Heart right ventricle (tissue), 16 donors: ENCODE measurements at regions of chr17 and their contacts with region 1.

Region 1: DNA sequence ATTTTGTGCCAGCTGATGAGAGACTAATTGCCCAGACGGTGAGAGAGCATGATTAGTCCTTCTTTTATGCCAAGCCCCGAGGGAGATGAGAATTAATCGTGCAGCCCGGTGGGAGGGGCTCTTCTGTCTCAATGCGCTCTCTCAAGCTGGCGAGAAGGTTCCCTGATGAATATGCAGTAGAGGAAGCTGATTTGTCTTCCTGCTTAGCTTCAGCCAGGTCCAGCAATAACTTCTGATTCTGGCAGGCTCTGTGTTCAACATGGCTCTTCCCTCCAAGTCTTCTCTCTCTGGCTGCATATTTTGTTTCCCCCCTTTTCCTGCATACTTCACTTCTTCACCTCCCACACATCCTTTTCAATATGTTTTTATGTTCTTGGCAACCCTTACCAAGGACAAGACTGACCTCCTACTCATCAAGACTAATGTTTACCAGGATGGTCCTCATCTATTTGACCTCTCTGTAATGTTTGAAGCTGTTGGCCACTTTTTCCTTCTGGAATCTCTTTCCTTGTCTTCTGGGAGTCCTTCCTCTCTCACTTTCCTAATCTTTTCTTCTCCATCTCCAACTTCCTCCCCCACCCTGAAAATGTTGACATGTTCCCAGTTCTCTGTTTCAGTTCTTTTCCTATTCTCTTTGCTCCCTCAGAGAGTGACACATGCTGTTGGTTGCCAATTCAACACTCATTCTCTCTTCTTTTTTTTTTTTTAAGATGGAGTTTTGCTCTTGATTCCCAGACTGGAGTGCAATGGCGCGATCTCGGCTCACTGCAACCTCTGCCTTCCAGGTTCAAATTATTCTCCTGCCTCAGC is 33.1 kb downstream of the ARL4D start:
- DNase-seq: peak in 1 of 2 donors; percentile 32
- ATAC-seq: peak; percentile 62 to 87 (median 79)
- H3K4me3 ChIP-seq: no peak overlapping the region
- H3K27ac ChIP-seq: peak overlapping the region in 8 of 10 donors; percentile 12 to 60 (median 33)
- H3K4me1 ChIP-seq: peaks cover 2 to 20% (median 11%) of the 10 kb centered on the region in 9 donors
- H3K27me3 ChIP-seq: peaks cover 0 to 13% (median 0%) of the 10 kb centered on the region in 7 donors
- CTCF ChIP-seq: no peak

Region 2: DNA sequence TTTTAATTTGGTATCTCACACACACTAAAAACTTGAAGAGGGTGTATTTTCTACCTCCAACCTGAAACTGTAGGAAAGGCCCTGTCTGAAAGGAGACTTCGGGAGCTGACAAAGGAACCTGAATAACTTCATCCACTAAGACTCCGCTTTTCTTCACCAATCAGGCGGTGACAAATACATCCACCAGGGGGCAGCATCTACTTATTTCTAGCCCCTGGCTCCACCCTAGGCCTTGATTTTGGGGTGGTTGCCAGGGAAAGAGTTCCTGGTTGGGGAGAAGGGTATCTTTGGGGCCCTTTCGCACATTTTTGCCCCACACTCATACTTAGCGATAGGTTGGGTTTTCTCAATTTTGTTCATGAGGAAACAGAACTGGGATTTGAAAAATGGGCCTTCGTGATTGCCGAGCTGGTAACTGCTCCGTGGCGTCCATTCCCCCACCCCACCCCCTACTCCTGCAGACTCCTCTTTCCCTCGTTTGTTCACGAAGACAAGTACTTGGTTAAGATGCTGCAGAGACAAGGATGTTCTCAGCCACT is 37.9 kb before region 1 on chr17:
- intact Hi-C with region 1: loop called in 1 of 10 experiments (anchors 5 kb)
- DNase-seq: peak; percentile 76 to 95
- ATAC-seq: peak; percentile 39 to 72 (median 61)
- H3K4me3 ChIP-seq: peak overlapping the region in 5 of 10 donors; percentile 7 to 36 (median 31)
- H3K27ac ChIP-seq: peak overlapping the region in 8 of 10 donors; percentile 15 to 73 (median 56)
- H3K4me1 ChIP-seq: peaks cover 0 to 38% (median 17%) of the 10 kb centered on the region in 9 donors
- H3K27me3 ChIP-seq: no peaks in the 10 kb centered on the region
- CTCF ChIP-seq: peak; percentile 91 to 98 (median 96)

Region 3: GRCh38 chr17:43467981-43468581 is 36.2 kb after region 1 on chr17:
- intact Hi-C with region 1: loop called in 1 of 10 experiments (anchors 5 kb)
- DNase-seq: no peak
- ATAC-seq: peak in 6 of 8 donors; percentile 18 to 65 (median 37)
- H3K4me3 ChIP-seq: no peak overlapping the region
- H3K27ac ChIP-seq: peak overlapping the region in 1 of 10 donors; percentile 21
- H3K4me1 ChIP-seq: peaks cover 0 to 18% (median 10%) of the 10 kb centered on the region in 9 donors
- H3K27me3 ChIP-seq: peaks cover 0 to 5% (median 0%) of the 10 kb centered on the region in 7 donors
- CTCF ChIP-seq: no peak